Lower leg skin (tissue), 4 donors: ENCODE measurements at regions of chr13 and their contacts with region 1.

Region 1: GRCh38 chr13:49300739-49301589 is 53.2 kb downstream of the CDADC1 start:
- DNase-seq: no peak
- H3K4me3 ChIP-seq: no peak overlapping the region
- CTCF ChIP-seq: peak in 1 of 3 donors; percentile 72
- POLR2A ChIP-seq: no peak

Region 2: DNA sequence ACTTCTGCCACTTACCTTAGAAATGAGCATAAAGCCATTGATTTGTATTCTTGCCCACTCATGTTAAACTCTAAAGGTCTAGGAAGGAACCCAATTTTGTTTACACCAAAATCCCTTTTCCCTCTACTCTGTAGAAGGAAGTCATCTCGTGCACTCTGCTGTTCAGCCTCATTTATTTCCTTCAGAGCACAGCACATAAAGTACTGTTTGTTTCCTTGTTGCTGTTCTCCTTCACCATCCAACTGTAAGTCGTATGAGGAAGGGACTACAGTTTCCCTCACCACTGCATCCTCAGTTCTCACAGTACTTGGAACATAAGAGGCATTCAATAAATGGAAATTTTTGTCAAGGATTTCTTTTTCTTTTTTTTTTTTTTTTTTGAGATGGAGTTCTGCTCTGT is 28.7 kb before region 1 on chr13:
- intact Hi-C with region 1: no loop called
- DNase-seq: no peak
- H3K4me3 ChIP-seq: no peak overlapping the region
- CTCF ChIP-seq: no peak
- POLR2A ChIP-seq: no peak

Region 3: DNA sequence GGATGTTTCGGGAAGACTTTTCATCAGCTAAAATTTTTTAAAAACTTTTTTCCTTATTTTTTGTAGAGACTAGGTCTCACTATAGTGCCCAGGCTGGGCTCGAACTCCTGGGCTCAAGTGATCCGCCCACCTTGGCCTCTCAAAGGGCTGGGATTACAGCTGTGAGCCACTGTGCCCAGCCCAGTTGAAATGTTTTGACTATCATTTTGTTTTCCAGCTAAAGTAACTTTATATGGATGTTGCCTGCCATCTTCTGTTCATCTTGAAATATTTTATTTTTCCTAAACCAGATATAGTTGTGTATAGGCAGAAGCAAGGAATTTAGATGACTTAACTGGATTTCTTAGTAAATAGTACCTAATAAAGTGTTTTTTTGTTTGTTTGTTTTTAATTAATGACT is 135.9 kb after region 1 on chr13:
- intact Hi-C with region 1: loop called (anchors 1 kb)
- DNase-seq: peak in 1 of 2 donors; percentile 30
- H3K4me3 ChIP-seq: no peak overlapping the region
- CTCF ChIP-seq: no peak
- POLR2A ChIP-seq: no peak

Region 4: GRCh38 chr13:49606747-49607648 is 306.0 kb after region 1 on chr13:
- intact Hi-C with region 1: loop called (anchors 10 kb)
- DNase-seq: peak; percentile 87 to 98
- H3K4me3 ChIP-seq: no peak overlapping the region
- CTCF ChIP-seq: peak in 1 of 3 donors; percentile 77
- POLR2A ChIP-seq: no peak